Mammary epithelial cell (primary cell): ENCODE measurements at regions of chr1 and their contacts with region 1.

Region 1: DNA sequence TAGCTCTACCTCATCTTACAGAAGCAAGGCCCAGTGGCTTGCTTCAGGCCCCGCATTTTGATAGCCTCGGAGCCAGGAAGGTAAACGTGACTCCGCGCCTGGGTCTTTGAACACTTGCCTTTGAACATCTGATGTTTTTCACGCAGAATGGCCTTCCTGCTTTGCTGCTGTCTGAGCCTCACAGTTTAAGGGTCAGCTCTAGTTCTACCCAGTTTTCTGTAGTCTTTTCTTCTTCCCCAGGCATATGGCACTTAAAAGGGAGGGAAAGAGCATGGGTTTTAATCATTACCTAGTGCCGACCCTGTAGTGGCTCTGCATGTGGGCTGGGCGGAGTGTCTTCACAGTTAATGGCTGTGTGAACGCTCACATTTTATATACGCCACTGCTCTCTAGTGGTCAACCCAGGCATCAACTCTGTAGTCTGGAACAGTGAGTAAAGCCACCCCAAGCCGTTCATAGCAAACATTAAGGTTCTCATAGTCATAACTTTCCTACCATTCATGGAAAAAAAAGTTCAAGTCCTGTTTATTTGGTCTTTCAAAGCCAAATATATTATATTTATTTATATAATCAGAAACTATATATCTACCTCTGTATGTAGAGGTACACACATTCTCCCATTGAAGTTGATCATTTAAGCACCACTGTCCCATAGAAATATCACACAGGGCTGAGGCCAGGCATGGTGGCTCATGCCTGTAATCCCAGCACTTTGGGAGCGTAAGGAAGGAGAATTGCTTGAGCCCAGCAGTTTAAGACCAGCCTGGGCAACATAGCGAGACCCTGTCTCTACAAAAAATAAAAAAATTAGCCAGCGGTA is 78.1 kb downstream of the IER5 start:
- DNase-seq: peak; percentile 66
- H3K4me3 ChIP-seq: no peak overlapping the region
- H3K27ac ChIP-seq: no peak overlapping the region
- H3K4me1 ChIP-seq: no peaks in the 10 kb centered on the region
- H3K27me3 ChIP-seq: no peaks in the 10 kb centered on the region
- CTCF ChIP-seq: peak; percentile 86 to 92

Region 2: DNA sequence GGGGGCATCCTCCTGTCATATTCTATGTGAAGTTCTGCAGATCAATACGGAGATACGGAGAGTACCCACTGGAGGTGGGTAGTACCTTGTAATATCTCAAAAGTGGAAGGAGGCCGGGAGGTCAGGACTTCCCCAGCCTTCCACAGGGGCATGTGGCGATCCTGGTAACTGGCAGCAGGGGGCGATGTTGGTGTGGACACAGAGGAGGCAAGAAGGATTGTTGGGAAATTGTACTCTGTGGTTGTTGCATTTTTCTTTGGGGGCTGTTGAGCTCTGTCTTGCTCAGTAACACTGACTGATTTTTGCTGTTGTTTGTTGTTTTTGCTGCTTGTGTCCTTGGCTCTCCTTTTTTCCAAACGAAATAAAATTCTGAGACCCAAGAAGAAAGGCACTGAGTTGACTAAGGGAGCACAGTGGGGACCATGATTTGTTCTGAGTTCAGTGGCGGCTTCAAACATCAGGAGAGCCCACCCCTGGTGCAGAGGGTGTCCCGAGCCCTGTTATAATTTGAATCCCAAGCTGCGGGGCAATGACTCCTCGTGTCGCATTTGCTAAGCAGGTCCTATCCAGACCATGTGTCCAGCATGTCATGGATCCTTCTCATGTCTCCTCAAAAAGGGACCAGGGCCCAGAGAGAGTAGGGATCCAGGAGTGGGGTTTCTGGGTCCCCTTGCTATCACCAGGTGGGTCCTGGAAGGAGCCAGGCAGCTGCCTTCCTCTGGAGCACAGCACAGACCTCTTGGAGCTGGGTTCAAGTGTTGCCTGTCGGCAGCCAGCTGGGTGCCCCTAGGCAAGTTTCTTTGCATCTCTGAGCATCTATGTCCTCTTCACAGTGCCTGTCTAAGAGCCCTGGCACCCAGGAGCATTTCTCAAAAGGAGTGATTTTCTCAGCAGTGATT is 913.7 kb before region 1 on chr1:
- CTCF ChIA-PET with region 1: no interaction called
- dilution Hi-C with region 1: no loop called
- in situ Hi-C with region 1: loop called in 1 of 2 experiments (anchors 25 kb)
- intact Hi-C with region 1: no loop called
- DNase-seq: peak; percentile 47
- H3K4me3 ChIP-seq: no peak overlapping the region
- H3K27ac ChIP-seq: no peak overlapping the region
- H3K4me1 ChIP-seq: no peaks in the 10 kb centered on the region
- H3K27me3 ChIP-seq: no peaks in the 10 kb centered on the region
- CTCF ChIP-seq: peak; percentile 92 to 93

Region 3: GRCh38 chr1:180515864-180516388 is 650.7 kb before region 1 on chr1:
- CTCF ChIA-PET with region 1: no interaction called
- dilution Hi-C with region 1: no loop called
- in situ Hi-C with region 1: loop called in 1 of 2 experiments (anchors 10 kb)
- intact Hi-C with region 1: loop called (anchors 1 kb)
- DNase-seq: peak; percentile 72
- H3K4me3 ChIP-seq: peak overlapping the region in 2 of 3 experiments; percentile 11 to 35
- H3K27ac ChIP-seq: peak overlapping the region; percentile 67
- H3K4me1 ChIP-seq: peaks cover 14% of the 10 kb centered on the region
- H3K27me3 ChIP-seq: no peaks in the 10 kb centered on the region
- CTCF ChIP-seq: peak; percentile 75 to 80

Region 4: DNA sequence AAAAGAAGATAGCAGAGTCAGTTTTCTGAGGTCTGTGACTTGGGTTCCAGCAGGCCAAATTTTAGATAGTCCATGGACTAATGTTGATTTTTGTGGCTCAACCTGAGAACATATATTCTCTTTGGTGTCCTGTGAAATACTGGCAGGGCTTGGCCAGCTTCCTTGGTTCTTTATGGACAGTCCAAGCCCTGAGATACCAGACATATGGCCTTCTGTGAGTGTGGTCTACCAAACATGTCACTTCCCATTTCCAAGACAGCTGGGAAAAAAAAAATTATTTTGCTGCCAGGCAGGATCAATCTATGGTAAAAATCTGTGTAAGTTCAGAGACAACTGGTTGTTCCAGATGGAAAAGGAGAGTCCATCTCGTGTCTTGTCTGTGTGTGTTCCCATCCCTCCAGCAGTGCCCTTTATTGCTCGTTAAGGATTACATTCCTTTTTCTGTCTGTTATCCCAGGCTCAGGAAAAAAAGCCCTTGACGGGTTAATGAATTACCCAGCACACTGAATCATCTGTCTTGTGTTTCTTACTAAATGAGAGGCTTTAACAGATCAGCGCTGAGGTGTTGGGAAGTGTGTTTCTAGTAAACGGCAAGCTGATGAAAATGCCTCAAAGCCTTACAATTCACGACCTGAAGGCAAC is 568.1 kb before region 1 on chr1:
- CTCF ChIA-PET with region 1: no interaction called
- dilution Hi-C with region 1: loop called (anchors 5 kb)
- in situ Hi-C with region 1: no loop called
- intact Hi-C with region 1: no loop called
- DNase-seq: no peak
- H3K4me3 ChIP-seq: no peak overlapping the region
- H3K27ac ChIP-seq: no peak overlapping the region
- H3K4me1 ChIP-seq: peaks cover 3% of the 10 kb centered on the region
- H3K27me3 ChIP-seq: no peaks in the 10 kb centered on the region
- CTCF ChIP-seq: no peak

Region 5: GRCh38 chr1:180778782-180779398 is 387.7 kb before region 1 on chr1:
- CTCF ChIA-PET with region 1: no interaction called
- dilution Hi-C with region 1: no loop called
- in situ Hi-C with region 1: no loop called
- intact Hi-C with region 1: loop called (anchors 5 kb)
- DNase-seq: peak; percentile 12
- H3K4me3 ChIP-seq: no peak overlapping the region
- H3K27ac ChIP-seq: no peak overlapping the region
- H3K4me1 ChIP-seq: no peaks in the 10 kb centered on the region
- H3K27me3 ChIP-seq: no peaks in the 10 kb centered on the region
- CTCF ChIP-seq: peak; percentile 63 to 66

Region 6: DNA sequence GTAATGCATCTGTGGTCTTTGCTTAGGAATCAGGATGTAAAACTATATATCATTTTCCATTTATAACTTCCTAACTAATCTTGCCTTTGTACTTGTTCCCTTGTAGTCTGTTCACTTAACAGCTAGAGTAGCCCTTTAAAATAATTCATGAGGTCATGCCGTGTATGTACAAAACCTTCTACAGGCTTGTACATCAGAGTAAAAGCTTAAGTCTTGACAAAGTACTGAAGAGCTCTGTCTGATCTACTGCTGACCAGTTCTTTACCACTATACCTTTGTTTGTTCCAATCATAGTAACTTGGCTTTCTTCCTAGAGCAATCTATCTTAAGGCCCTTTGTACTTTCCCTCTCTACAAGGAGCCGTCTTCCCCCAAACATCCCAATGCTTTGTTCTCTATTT is 344.6 kb before region 1 on chr1:
- CTCF ChIA-PET with region 1: no interaction called
- dilution Hi-C with region 1: no loop called
- in situ Hi-C with region 1: no loop called
- intact Hi-C with region 1: no loop called
- DNase-seq: no peak
- H3K4me3 ChIP-seq: no peak overlapping the region
- H3K27ac ChIP-seq: no peak overlapping the region
- H3K4me1 ChIP-seq: no peaks in the 10 kb centered on the region
- H3K27me3 ChIP-seq: no peaks in the 10 kb centered on the region
- CTCF ChIP-seq: no peak

Region 7: DNA sequence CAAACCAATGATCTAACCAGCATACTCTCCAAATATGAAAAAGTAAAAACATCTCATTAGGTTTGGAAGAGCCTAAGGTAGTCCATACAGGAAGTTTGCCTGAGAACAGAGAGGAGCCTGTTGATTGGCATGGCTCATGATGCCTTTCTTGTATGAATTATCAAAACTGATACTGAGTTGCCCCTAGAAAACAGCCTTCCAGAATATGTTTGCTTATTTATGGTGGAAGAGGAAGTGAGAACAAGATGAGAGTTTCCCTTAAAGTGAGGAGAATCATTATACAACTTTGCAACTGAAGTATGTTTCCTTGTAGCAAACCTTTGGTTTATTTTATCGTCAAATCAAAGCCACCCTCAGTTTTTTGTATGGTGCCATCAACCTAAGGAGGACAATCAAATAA is 277.7 kb before region 1 on chr1:
- CTCF ChIA-PET with region 1: no interaction called
- dilution Hi-C with region 1: loop called (anchors 5 kb)
- in situ Hi-C with region 1: loop called (anchors 5 kb)
- intact Hi-C with region 1: no loop called
- DNase-seq: no peak
- H3K4me3 ChIP-seq: no peak overlapping the region
- H3K27ac ChIP-seq: no peak overlapping the region
- H3K4me1 ChIP-seq: no peaks in the 10 kb centered on the region
- H3K27me3 ChIP-seq: no peaks in the 10 kb centered on the region
- CTCF ChIP-seq: no peak

Region 8: GRCh38 chr1:181033799-181034451 is 132.7 kb before region 1 on chr1 and contains the start of gene MR1:
- CTCF ChIA-PET with region 1: no interaction called
- dilution Hi-C with region 1: loop called (anchors 5 kb)
- in situ Hi-C with region 1: no loop called
- intact Hi-C with region 1: loop called (anchors 1 kb)
- DNase-seq: peak; percentile 86
- H3K4me3 ChIP-seq: peak within 1 kb of the TSS; percentile 61 to 62 (median 62)
- H3K27ac ChIP-seq: peak within 1 kb of the TSS; percentile 94
- H3K4me1 ChIP-seq: peaks cover 21% of the 10 kb centered on the region
- H3K27me3 ChIP-seq: no peaks in the 10 kb centered on the region
- CTCF ChIP-seq: no peak
- total RNA-seq, gene MR1: 20.4 to 46.3 TPM

Region 9: DNA sequence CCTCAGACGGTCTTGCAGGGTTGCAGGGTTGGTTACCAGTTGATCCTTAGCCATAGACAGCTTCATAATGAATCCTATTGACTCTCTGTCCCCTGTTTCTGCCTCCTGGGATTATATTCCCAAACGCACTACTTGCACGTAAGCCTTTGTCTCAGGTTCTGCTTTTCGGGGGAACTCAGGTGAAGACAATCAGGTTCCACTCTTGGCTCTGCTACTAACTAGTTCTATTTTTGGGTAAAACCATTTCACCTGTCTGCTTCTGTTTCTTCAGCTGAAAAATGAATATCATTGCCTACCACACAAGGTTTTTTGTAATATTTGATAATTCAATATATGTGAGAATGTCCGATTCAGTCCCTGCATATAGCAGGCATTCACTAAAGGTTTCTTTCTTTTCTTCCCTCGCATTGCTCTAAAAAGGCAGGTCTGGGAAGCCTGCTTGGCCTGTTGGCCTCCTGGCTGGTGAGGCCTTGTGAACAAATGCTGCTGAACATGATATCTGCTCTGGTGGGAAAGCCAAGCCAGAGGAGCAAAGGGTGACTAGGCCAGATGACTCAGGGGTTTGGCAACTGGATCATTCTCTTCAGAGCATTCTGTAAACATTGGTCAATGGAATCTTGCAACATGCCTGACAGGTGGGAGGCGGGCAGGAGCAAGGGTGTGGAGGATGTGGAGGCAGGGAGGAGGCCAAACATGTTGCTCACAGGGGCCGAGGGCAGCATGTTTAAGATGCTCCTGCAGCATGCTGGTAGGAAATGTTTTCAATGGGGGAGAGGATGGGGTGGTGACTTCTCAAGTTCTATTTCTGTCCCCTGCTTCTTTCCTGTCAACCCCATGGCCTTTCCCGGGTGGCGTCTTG is 54.3 kb before region 1 on chr1:
- CTCF ChIA-PET with region 1: no interaction called
- dilution Hi-C with region 1: no loop called
- in situ Hi-C with region 1: no loop called
- intact Hi-C with region 1: no loop called
- DNase-seq: peak; percentile 100
- H3K4me3 ChIP-seq: no peak overlapping the region
- H3K27ac ChIP-seq: peak overlapping the region; percentile 79
- H3K4me1 ChIP-seq: peaks cover 51% of the 10 kb centered on the region
- H3K27me3 ChIP-seq: no peaks in the 10 kb centered on the region
- CTCF ChIP-seq: no peak